Activated B cell treated with CpG ODN at 0.5 μM for 24 hours (primary cell): ENCODE measurements at regions of chr16 and their contacts with region 1.

Region 1: GRCh38 chr16:70276392-70276791 is 12.9 kb downstream of the AARS1 start:
- DNase-seq: no peak
- ATAC-seq: no peak
- H3K4me3 Mint-ChIP-seq: no peak overlapping the region
- H3K27ac Mint-ChIP-seq: no peak overlapping the region
- H3K4me1 Mint-ChIP-seq: no peaks in the 10 kb centered on the region
- H3K27me3 Mint-ChIP-seq: no peaks in the 10 kb centered on the region
- CTCF ChIP-seq: no peak

Region 2: GRCh38 chr16:69105489-69106361 is 1170.7 kb before region 1 on chr16 and contains the start of gene HAS3:
- CTCF ChIA-PET with region 1: no interaction called
- POLR2A ChIA-PET with region 1: interaction called, 10 read pairs
- intact Hi-C with region 1: no loop called
- DNase-seq: peak; percentile 38
- ATAC-seq: peak; percentile 71
- H3K4me3 Mint-ChIP-seq: peak within 1 kb of the TSS; percentile 86
- H3K27ac Mint-ChIP-seq: peak within 1 kb of the TSS; percentile 66
- H3K4me1 Mint-ChIP-seq: peaks cover 18% of the 10 kb centered on the region
- H3K27me3 Mint-ChIP-seq: peaks cover 34% of the 10 kb centered on the region
- CTCF ChIP-seq: no peak
- total RNA-seq, gene HAS3: 0.71 and 0.82 TPM in 2 replicates

Region 3: GRCh38 chr16:70304892-70305448 is 28.6 kb after region 1 on chr16:
- CTCF ChIA-PET with region 1: no interaction called
- POLR2A ChIA-PET with region 1: no interaction called
- intact Hi-C with region 1: no loop called
- DNase-seq: no peak
- ATAC-seq: no peak
- H3K4me3 Mint-ChIP-seq: no peak overlapping the region
- H3K27ac Mint-ChIP-seq: peak overlapping the region; percentile 12
- H3K4me1 Mint-ChIP-seq: peaks cover 40% of the 10 kb centered on the region
- H3K27me3 Mint-ChIP-seq: no peaks in the 10 kb centered on the region
- CTCF ChIP-seq: no peak